A549 (cell line): ENCODE measurements at regions of chr6 and their contacts with region 1.

Region 1: GRCh38 chr6:33834401-33835392 is 30.9 kb upstream of the MLN start:
- DNase-seq: no peak
- ATAC-seq: no peak
- H3K4me3 ChIP-seq: no peak overlapping the region
- H3K27ac ChIP-seq: peak overlapping the region in 1 of 2 experiments; percentile 75; a peak in 3 of 6 replicates
- H3K4me1 ChIP-seq: peaks cover 22% of the 10 kb centered on the region
- CTCF ChIP-seq: no peak
- EP300 ChIP-seq: no peak
- POLR2A ChIP-seq: no peak
- RAD21 ChIP-seq: no peak

Region 2: DNA sequence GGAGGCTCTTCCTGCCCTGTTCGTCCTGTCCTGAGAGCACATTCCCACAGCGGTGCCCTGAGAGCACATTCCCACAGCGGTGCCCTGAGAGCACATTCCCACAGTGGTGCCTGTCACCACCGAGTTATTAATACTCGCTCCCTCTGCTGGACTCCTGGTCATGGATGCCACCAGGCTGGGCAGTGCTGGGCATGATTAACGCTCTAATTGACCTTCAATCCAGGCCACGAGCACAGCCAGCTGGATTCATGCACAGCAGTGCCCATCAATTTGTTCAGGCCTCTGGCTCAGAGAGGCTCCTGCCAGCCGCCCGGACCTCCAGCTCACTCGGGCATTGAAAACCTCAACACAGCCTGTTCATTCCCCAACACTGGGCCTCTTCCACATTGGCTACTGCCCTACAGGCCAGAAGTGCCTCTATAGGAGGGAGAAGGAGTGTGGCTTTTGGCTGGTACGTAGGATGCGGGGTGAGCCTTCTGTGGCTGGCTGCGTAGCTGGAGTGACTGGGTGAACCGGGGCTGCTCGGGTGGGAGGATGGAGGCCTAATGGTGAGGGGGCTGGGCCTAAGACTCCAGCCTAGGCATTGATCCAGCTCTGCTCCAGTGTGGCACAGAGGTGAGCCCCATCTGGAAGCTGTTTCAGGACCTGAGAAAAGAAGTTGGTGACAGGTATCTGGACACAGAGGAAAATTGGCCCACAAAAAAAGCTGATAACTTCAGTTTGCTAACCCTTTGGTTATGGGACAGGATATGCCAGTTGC is 97.2 kb before region 1 on chr6:
- CTCF ChIA-PET with region 1: no interaction called
- POLR2A ChIA-PET with region 1: no interaction called
- DNase-seq: no peak
- ATAC-seq: no peak; a peak in 1 of 6 replicates
- H3K4me3 ChIP-seq: no peak overlapping the region
- H3K27ac ChIP-seq: no peak overlapping the region
- H3K4me1 ChIP-seq: no peaks in the 10 kb centered on the region
- CTCF ChIP-seq: no peak
- EP300 ChIP-seq: no peak
- POLR2A ChIP-seq: no peak
- RAD21 ChIP-seq: no peak

Region 3: GRCh38 chr6:33822575-33823395 is 11.9 kb before region 1 on chr6:
- CTCF ChIA-PET with region 1: interaction called, 13 read pairs
- POLR2A ChIA-PET with region 1: no interaction called
- DNase-seq: peak; percentile 54 to 72
- ATAC-seq: peak; percentile 67 to 93; a peak in 4 of 6 replicates
- H3K4me3 ChIP-seq: no peak overlapping the region
- H3K27ac ChIP-seq: no peak overlapping the region
- H3K4me1 ChIP-seq: no peaks in the 10 kb centered on the region
- CTCF ChIP-seq: no peak
- EP300 ChIP-seq: no peak
- POLR2A ChIP-seq: no peak
- RAD21 ChIP-seq: no peak